Caco-2 (cell line): ENCODE measurements at regions of chr1 and their contacts with region 1.

Region 1: DNA sequence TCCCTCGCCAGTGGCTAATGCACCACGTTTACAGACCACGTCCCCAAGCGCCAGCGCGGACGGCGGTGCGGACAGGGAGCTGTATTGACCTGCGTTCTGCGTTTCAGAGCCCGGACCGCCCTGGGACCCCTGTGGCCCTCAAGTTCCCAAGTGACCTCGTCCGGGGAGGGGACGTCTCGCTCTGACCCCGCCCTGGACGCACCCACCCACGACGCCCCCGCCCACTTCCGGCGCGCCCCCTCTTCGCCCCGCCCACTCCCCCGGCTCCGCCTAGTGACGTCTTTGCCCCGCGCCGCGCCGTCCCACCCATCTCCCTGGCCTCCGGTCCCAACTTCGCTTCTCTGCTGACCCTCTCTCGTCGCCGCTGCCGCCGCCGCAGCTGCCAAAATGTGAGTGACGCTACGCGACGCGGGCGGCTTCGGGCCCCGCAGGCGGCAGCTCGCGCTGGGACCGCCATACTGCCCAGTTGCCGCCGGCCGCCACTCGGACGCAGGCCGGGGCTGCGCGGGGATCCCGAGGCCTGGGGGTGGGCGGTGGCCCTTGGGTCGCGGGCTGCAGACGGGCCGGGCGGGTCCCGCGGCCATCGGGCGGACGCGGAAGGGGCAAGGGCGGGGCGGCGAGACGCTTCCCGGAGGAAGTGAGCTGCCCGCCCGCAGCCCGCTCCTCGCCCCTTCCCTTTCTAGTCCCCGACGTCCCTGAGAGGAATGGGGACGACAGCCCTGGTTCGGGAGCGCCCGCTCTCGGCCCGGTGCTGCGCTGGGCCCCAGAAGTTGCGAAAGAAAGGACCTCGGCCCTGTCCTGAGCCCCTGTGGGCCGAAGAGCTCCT is at the start of gene VAMP3:
- DNase-seq: peak; percentile 89 to 90
- H3K4me3 ChIP-seq: peak within 1 kb of the TSS; percentile 68
- H3K4me3 Mint-ChIP-seq: peak within 1 kb of the TSS; percentile 89
- H3K27ac Mint-ChIP-seq: peak within 1 kb of the TSS; percentile 82
- H3K4me1 ChIP-seq: peaks cover 9% of the 10 kb centered on the region
- H3K4me1 Mint-ChIP-seq: peaks cover 6% of the 10 kb centered on the region
- H3K27me3 ChIP-seq: no peaks in the 10 kb centered on the region
- H3K27me3 Mint-ChIP-seq: peaks cover 2% of the 10 kb centered on the region
- CTCF ChIP-seq: no peak
- total RNA-seq, gene VAMP3: 71.8 and 77.8 TPM in 2 replicates

Region 2: DNA sequence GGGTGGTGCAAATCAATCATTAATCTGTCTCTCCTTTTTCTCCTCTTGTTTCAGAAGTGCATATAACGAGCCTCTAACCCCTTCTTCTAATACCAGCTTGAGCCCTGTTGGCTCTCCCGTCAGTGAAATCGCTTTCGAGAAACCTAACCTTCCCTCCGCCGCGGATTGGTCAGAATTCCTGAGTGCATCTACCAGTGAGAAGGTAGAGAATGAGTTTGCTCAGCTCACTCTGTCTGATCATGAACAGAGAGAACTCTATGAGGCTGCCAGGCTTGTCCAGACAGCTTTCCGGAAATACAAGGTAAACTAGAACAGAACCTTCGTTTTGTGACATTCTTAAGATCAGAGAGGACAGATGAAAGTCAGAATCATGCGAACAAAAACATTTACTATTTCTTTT is 25.4 kb before region 1 on chr1:
- CTCF ChIA-PET with region 1: no interaction called
- POLR2A ChIA-PET with region 1: interaction called, 11 read pairs
- intact Hi-C with region 1: no loop called
- DNase-seq: no peak
- H3K4me3 ChIP-seq: no peak overlapping the region
- H3K4me3 Mint-ChIP-seq: no peak overlapping the region
- H3K27ac Mint-ChIP-seq: no peak overlapping the region
- H3K4me1 ChIP-seq: no peaks in the 10 kb centered on the region
- H3K4me1 Mint-ChIP-seq: no peaks in the 10 kb centered on the region
- H3K27me3 ChIP-seq: no peaks in the 10 kb centered on the region
- H3K27me3 Mint-ChIP-seq: no peaks in the 10 kb centered on the region
- CTCF ChIP-seq: no peak

Region 3: DNA sequence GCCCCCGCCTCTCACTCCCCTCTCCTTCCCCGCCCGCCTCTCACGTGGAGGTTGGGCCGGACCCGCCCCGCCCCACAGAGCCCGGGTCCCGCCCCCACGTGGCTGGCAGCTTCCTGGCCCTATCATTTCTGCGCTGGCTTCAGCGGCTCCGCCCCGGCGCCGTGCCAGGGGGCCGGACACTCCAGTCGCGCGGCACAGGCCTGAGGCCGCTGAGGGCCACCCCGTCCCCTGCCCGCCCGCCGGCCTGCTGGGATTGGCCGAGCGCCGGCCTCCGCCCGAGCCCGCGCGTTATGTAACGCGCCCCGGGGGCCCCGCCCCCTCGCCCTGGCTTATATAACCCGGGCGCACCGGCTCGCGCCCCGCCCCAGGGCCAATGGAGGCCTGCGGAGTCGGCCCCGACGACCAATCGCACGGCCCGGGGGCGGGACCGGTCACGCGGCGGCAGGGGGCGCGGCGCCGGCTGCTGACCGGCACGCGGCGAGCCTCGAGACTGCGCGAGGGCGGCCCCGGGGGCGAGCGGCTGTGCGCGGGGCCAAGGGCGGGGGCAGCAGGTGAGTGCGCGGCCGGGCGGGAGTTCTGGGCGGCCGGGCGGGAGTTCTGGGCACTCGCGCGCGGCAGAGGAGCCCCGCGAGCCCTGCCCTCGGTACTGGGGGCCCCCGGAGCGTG is 12.7 kb after region 1 on chr1 and contains the start of gene PER3:
- CTCF ChIA-PET with region 1: no interaction called
- POLR2A ChIA-PET with region 1: no interaction called
- intact Hi-C with region 1: loop called (anchors 1 kb)
- DNase-seq: peak; percentile 95 to 98
- H3K4me3 ChIP-seq: peak within 1 kb of the TSS; percentile 75
- H3K4me3 Mint-ChIP-seq: peak within 1 kb of the TSS; percentile 68
- H3K27ac Mint-ChIP-seq: no peak within 1 kb of the TSS
- H3K4me1 ChIP-seq: peaks cover 7% of the 10 kb centered on the region
- H3K4me1 Mint-ChIP-seq: peaks cover 18% of the 10 kb centered on the region
- H3K27me3 ChIP-seq: no peaks in the 10 kb centered on the region
- H3K27me3 Mint-ChIP-seq: no peaks in the 10 kb centered on the region
- CTCF ChIP-seq: no peak
- total RNA-seq, gene PER3: 24.4 and 27.4 TPM in 2 replicates

Region 4: DNA sequence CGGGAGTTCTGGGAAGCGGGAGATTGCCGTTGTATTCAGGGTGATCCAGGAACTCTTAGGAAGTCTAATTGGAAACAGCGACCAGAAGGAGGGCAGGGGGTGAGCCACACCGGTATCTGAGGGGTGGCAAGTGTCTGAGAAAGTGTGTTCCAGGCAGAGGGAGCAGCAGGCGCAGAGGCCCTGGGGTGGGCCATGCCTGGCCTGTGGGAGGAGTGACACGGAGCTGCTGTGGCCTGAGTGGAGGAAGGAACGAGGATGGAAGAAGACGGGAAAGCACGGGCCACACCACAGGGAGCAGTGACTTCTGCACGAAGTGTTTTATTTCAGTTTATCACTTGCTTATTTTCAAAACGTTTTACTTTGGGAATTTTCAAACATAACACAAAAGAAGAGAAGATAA is 24.2 kb after region 1 on chr1:
- CTCF ChIA-PET with region 1: no interaction called
- POLR2A ChIA-PET with region 1: no interaction called
- intact Hi-C with region 1: no loop called
- DNase-seq: no peak
- H3K4me3 ChIP-seq: no peak overlapping the region
- H3K4me3 Mint-ChIP-seq: no peak overlapping the region
- H3K27ac Mint-ChIP-seq: no peak overlapping the region
- H3K4me1 ChIP-seq: no peaks in the 10 kb centered on the region
- H3K4me1 Mint-ChIP-seq: no peaks in the 10 kb centered on the region
- H3K27me3 ChIP-seq: no peaks in the 10 kb centered on the region
- H3K27me3 Mint-ChIP-seq: no peaks in the 10 kb centered on the region
- CTCF ChIP-seq: no peak